ENCODE measurements at regions of chr2 and their contacts with region 1.

Region 1: GRCh38 chr2:143162123-143162837 is 33.1 kb downstream of the ARHGAP15 start:
- DNase-seq: peak; percentile 18
- ATAC-seq: peak; percentile 92
- H3K4me3 ChIP-seq: no peak overlapping the region
- H3K27ac ChIP-seq: no peak overlapping the region
- H3K4me1 ChIP-seq: no peaks in the 10 kb centered on the region
- H3K27me3 ChIP-seq: peaks cover 2% of the 10 kb centered on the region; the same call in 1 of the 2 replicates
- CTCF ChIP-seq: peak; percentile 72

Region 2: DNA sequence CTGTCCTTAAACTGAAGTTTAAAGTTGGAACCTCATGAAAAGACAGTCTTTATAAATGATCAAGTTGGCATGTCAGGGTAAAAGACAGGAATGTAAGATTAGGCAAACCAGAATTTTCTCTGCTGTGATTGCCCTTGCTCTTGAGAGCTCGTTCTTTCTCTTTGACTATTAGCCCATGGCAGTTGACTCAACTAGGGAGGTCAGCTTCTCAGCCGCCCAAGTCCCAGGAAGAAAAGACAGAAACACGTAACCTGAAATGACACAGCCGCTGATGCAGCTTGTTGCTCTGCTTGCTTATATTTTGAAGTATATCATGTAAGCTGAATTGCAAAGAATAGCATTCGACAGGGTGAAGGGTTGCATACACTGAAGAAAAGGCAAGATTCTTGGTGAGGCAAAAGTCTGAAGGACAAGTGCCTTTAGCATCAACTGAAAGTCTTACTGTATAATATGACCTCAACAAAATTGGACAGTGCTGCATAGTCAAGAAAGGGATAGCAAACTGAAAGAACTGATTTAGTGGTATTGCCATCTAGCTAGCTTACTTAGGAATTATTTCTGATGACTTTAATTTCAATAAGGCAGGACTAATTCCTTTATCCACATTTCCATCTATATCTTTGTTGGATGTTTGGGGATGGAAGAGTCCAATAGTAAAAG is 21.7 kb after region 1 on chr2:
- CTCF ChIA-PET with region 1: no interaction called
- POLR2A ChIA-PET with region 1: no interaction called
- in situ Hi-C with region 1: no loop called
- intact Hi-C with region 1: no loop called
- DNase-seq: no peak
- ATAC-seq: no peak
- H3K4me3 ChIP-seq: no peak overlapping the region
- H3K27ac ChIP-seq: no peak overlapping the region
- H3K4me1 ChIP-seq: no peaks in the 10 kb centered on the region
- H3K27me3 ChIP-seq: no peaks in the 10 kb centered on the region; the same call in 1 of the 2 replicates
- CTCF ChIP-seq: no peak

Region 3: DNA sequence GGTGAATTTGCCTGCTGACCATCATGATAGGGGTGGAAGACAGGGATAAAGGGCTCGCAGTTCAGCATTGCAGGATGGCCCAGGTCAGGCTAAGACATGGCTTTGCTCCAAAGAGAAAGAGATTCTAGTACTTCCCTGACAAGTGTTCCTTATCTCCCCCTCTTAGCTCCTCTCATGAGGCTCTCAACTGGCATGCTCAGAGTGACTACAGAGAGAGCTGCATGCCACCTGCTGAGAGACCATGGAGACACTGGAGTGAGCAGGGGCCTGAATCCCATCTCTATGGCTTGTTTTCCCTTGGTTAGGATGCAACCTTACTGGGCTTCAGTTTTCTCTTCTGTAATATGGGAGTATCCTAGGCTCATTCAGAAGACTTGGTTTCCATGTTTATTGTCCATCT is 61.3 kb after region 1 on chr2:
- CTCF ChIA-PET with region 1: no interaction called
- POLR2A ChIA-PET with region 1: no interaction called
- in situ Hi-C with region 1: no loop called
- intact Hi-C with region 1: loop called (anchors 5 kb)
- DNase-seq: no peak
- ATAC-seq: no peak
- H3K4me3 ChIP-seq: no peak overlapping the region
- H3K27ac ChIP-seq: no peak overlapping the region
- H3K4me1 ChIP-seq: no peaks in the 10 kb centered on the region
- H3K27me3 ChIP-seq: no peaks in the 10 kb centered on the region
- CTCF ChIP-seq: no peak

Region 4: GRCh38 chr2:144004742-144005141 is 842.5 kb after region 1 on chr2:
- CTCF ChIA-PET with region 1: no interaction called
- POLR2A ChIA-PET with region 1: no interaction called
- in situ Hi-C with region 1: no loop called
- intact Hi-C with region 1: no loop called
- DNase-seq: no peak
- ATAC-seq: no peak
- H3K4me3 ChIP-seq: no peak overlapping the region
- H3K27ac ChIP-seq: no peak overlapping the region
- H3K4me1 ChIP-seq: no peaks in the 10 kb centered on the region
- H3K27me3 ChIP-seq: no peaks in the 10 kb centered on the region
- CTCF ChIP-seq: no peak

Region 5: GRCh38 chr2:144480285-144480684 is 1318.0 kb after region 1 on chr2:
- CTCF ChIA-PET with region 1: no interaction called
- POLR2A ChIA-PET with region 1: no interaction called
- in situ Hi-C with region 1: no loop called
- intact Hi-C with region 1: loop called (anchors 5 kb)
- DNase-seq: no peak
- ATAC-seq: no peak
- H3K4me3 ChIP-seq: no peak overlapping the region
- H3K27ac ChIP-seq: no peak overlapping the region
- H3K4me1 ChIP-seq: no peaks in the 10 kb centered on the region
- H3K27me3 ChIP-seq: no peaks in the 10 kb centered on the region
- CTCF ChIP-seq: no peak